PC-9 (cell line): ENCODE measurements at regions of chr21 and their contacts with region 1.

Region 1: GRCh38 chr21:41783441-41784161 is 16.7 kb upstream of the RIPK4 start:
- DNase-seq: peak; percentile 95
- H3K4me3 ChIP-seq: peak overlapping the region; percentile 13; the same call in 1 of the 2 replicates
- H3K27ac ChIP-seq: peak overlapping the region; percentile 99
- H3K4me1 ChIP-seq: peaks cover 57% of the 10 kb centered on the region
- H3K27me3 ChIP-seq: no peaks in the 10 kb centered on the region
- CTCF ChIP-seq: no peak

Region 2: DNA sequence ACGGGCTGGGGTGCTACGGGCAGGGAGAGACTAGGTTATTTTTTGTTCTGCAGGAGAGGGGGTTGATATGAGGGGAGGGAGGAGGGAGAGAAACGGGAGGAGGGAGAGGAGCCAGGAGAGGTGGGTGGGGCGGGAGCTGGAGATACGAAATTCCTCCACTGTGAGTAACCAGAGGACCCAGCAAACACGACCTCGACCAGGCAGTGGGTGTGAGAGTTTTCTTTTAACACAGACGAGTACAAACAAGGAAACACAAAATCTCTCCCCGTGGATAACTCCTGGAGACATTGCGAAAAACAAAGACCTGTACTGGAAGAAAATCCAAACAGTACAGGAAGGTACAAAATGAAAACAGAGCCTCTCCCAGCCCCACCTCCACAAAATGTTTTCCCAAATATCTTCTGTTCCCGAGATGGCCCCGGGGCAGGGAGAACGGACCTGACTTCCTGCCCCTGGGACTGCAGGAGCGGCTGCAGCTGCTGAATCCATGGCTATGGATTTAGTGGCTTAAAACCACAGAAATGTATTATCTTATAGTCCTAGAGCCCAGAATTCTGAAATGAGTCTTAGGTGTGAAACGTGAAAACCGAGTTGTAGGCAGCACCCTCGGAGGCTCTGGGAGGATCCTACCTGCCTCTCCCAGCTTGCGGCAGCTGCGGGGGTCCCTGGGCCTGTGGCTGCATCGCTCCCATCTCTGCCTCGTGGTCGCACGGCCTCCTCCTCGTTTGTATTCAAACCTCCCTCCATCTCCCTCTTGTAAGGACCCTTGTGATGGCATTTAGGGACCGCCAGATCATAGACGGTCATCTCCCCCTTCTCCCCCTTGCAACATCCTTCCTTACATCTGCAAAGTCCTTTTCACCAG is 99.0 kb before region 1 on chr21:
- CTCF ChIA-PET with region 1: no interaction called
- POLR2A ChIA-PET with region 1: interaction called, 8 read pairs
- intact Hi-C with region 1: loop called (anchors 1 kb)
- DNase-seq: peak; percentile 69 to 92
- H3K4me3 ChIP-seq: peak overlapping the region; percentile 7; the same call in 1 of the 2 replicates
- H3K27ac ChIP-seq: peak overlapping the region; percentile 99
- H3K4me1 ChIP-seq: peaks cover 77% of the 10 kb centered on the region
- H3K27me3 ChIP-seq: no peaks in the 10 kb centered on the region
- CTCF ChIP-seq: no peak

Region 3: GRCh38 chr21:41706678-41707077 is 76.9 kb before region 1 on chr21:
- CTCF ChIA-PET with region 1: no interaction called
- POLR2A ChIA-PET with region 1: interaction called, 11 read pairs
- intact Hi-C with region 1: no loop called
- DNase-seq: peak in 1 of 2 experiments; percentile 80
- H3K4me3 ChIP-seq: no peak overlapping the region
- H3K27ac ChIP-seq: peak overlapping the region; percentile 93
- H3K4me1 ChIP-seq: peaks cover 79% of the 10 kb centered on the region
- H3K27me3 ChIP-seq: no peaks in the 10 kb centered on the region
- CTCF ChIP-seq: no peak

Region 4: DNA sequence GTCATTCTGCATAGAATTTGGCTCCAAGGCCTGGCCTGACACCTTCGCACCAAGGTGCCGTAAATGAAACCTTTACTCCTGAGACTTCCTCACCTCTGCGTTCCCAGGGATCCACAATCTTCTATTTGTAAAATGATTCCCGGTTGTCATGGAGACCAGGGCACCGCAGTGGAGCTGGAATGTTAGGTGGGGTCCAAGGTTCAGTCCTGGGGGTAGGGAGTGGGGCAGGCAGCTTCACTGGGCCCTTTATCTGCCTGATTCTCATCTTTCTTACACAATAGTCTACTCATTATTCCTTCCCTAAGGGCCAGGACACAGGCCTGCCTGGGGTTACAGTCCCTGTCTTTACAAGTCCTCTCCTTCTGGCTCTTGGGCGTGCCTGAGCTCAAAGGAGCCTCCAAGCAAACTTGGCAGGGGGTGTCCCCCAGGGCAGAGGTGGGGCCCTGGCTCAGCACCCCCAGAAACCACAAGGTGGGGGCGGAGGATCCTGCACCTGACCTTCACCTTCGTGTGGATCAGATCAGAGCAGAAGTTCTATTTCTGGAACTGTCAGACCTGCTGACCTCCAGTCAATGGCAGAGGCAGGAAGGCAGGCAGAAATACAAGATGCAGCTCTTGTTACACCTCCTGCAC is 67.8 kb before region 1 on chr21:
- CTCF ChIA-PET with region 1: interaction called, 3 read pairs
- POLR2A ChIA-PET with region 1: no interaction called
- intact Hi-C with region 1: loop called (anchors 1 kb)
- DNase-seq: peak; percentile 95 to 98
- H3K4me3 ChIP-seq: no peak overlapping the region
- H3K27ac ChIP-seq: peak overlapping the region; percentile 93
- H3K4me1 ChIP-seq: peaks cover 49% of the 10 kb centered on the region
- H3K27me3 ChIP-seq: no peaks in the 10 kb centered on the region
- CTCF ChIP-seq: no peak

Region 5: GRCh38 chr21:41726945-41727783 is 56.4 kb before region 1 on chr21:
- CTCF ChIA-PET with region 1: interaction called, 7 read pairs
- POLR2A ChIA-PET with region 1: no interaction called
- intact Hi-C with region 1: loop called (anchors 2 kb)
- DNase-seq: peak; percentile 89 to 93
- H3K4me3 ChIP-seq: peak overlapping the region; percentile 27; the same call in 1 of the 2 replicates
- H3K27ac ChIP-seq: peak overlapping the region; percentile 93
- H3K4me1 ChIP-seq: peaks cover 56% of the 10 kb centered on the region
- H3K27me3 ChIP-seq: no peaks in the 10 kb centered on the region
- CTCF ChIP-seq: peak; percentile 37; the same call in 1 of the 2 replicates

Region 6: GRCh38 chr21:41768437-41769061 is 15.1 kb before region 1 on chr21:
- CTCF ChIA-PET with region 1: no interaction called
- POLR2A ChIA-PET with region 1: interaction called, 23 read pairs
- intact Hi-C with region 1: loop called (anchors 1 kb)
- DNase-seq: peak; percentile 28 to 80
- H3K4me3 ChIP-seq: peak overlapping the region; percentile 100
- H3K27ac ChIP-seq: peak overlapping the region; percentile 99
- H3K4me1 ChIP-seq: peaks cover 12% of the 10 kb centered on the region
- H3K27me3 ChIP-seq: no peaks in the 10 kb centered on the region
- CTCF ChIP-seq: no peak; the same call in 1 of the 2 replicates

Region 7: GRCh38 chr21:41851090-41851780 is 67.6 kb after region 1 on chr21:
- CTCF ChIA-PET with region 1: no interaction called
- POLR2A ChIA-PET with region 1: no interaction called
- intact Hi-C with region 1: no loop called
- DNase-seq: no peak
- H3K4me3 ChIP-seq: no peak overlapping the region
- H3K27ac ChIP-seq: no peak overlapping the region
- H3K4me1 ChIP-seq: no peaks in the 10 kb centered on the region
- H3K27me3 ChIP-seq: no peaks in the 10 kb centered on the region
- CTCF ChIP-seq: no peak

Region 8: GRCh38 chr21:41926117-41926806 is 142.7 kb after region 1 on chr21:
- CTCF ChIA-PET with region 1: no interaction called
- POLR2A ChIA-PET with region 1: interaction called, 10 read pairs
- intact Hi-C with region 1: no loop called
- DNase-seq: peak in 1 of 2 experiments; percentile 27
- H3K4me3 ChIP-seq: no peak overlapping the region
- H3K27ac ChIP-seq: no peak overlapping the region
- H3K4me1 ChIP-seq: no peaks in the 10 kb centered on the region
- H3K27me3 ChIP-seq: no peaks in the 10 kb centered on the region
- CTCF ChIP-seq: no peak